Gastrocnemius medialis (tissue), 4 donors: ENCODE measurements at regions of chrX and their contacts with region 1.

Region 1: GRCh38 chrX:44872817-44873414 is at the start of gene KDM6A:
- DNase-seq: peak; percentile 91 to 95
- ATAC-seq: peak; percentile 84 to 86
- H3K4me3 ChIP-seq: peak within 1 kb of the TSS; percentile 74 to 83 (median 77)
- H3K27ac ChIP-seq: peak within 1 kb of the TSS; percentile 94 to 100 (median 98)
- H3K4me1 ChIP-seq: peaks cover 13 to 42% of the 10 kb centered on the region in 2 donors
- H3K27me3 ChIP-seq: no peaks in the 10 kb centered on the region
- CTCF ChIP-seq: no peak
- POLR2A ChIP-seq: peak; percentile 90 to 96
- total RNA-seq, gene KDM6A: 14.3 to 29.2 (median 20.1) TPM

Region 2: DNA sequence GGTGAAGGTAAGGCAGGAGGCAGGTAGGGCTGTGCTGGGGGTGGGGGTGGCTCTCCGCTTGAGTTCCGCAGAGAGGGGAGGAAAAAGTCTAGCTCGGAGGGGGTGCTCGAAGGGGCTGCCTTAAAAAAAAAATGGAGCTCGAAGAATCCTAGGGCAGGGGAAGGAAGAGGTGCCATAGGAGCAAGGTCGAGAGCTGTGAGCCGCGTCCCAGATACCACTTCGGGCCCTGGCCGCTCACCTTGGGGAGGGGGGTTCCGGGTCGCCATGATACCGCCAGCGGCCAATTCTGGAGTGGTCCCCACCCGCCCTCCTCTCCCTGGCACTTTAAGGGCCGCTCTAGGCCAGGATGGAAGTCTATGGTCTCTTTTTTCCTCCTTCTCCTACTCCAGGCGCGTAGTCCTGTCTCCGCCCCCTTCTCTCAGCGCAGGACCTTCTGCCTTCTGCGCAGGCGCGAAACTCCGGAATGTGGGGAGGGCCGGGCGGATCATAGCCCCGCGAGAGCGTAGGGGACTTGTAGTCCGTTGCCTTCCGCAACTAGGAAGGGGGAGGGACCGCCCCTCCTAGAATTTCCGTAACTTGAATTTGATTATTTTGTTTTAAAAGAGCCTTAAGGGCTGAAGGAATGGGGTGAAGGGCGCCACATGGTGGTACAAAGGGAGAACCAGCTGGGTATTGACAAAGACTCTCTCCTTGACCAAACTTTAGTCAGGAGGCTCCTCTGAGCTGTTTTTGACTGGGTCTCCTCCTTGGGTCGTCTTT is 330.2 kb before region 1 on chrX and contains the start of gene FUNDC1:
- in situ Hi-C with region 1: no loop called
- intact Hi-C with region 1: loop called (anchors 5 kb)
- DNase-seq: peak; percentile 77 to 89
- ATAC-seq: peak; percentile 99
- H3K4me3 ChIP-seq: peak within 1 kb of the TSS; percentile 48 to 80 (median 62)
- H3K27ac ChIP-seq: peak within 1 kb of the TSS; percentile 57 to 82 (median 77)
- H3K4me1 ChIP-seq: peaks cover 5 to 12% of the 10 kb centered on the region in 2 donors
- H3K27me3 ChIP-seq: no peaks in the 10 kb centered on the region
- CTCF ChIP-seq: peak in 3 of 5 experiments; percentile 23 to 31 (median 24)
- POLR2A ChIP-seq: peak; percentile 20 to 28
- total RNA-seq, gene FUNDC1: 3.5 to 17.0 (median 6.2) TPM

Region 3: GRCh38 chrX:44651358-44651757 is 221.6 kb before region 1 on chrX:
- in situ Hi-C with region 1: no loop called
- intact Hi-C with region 1: loop called (anchors 5 kb)
- DNase-seq: peak; percentile 47 to 83
- ATAC-seq: peak; percentile 96 to 98
- H3K4me3 ChIP-seq: no peak overlapping the region
- H3K27ac ChIP-seq: peak overlapping the region; percentile 56 to 73 (median 62)
- H3K4me1 ChIP-seq: no peaks in the 10 kb centered on the region
- H3K27me3 ChIP-seq: no peaks in the 10 kb centered on the region
- CTCF ChIP-seq: no peak
- POLR2A ChIP-seq: no peak

Region 4: DNA sequence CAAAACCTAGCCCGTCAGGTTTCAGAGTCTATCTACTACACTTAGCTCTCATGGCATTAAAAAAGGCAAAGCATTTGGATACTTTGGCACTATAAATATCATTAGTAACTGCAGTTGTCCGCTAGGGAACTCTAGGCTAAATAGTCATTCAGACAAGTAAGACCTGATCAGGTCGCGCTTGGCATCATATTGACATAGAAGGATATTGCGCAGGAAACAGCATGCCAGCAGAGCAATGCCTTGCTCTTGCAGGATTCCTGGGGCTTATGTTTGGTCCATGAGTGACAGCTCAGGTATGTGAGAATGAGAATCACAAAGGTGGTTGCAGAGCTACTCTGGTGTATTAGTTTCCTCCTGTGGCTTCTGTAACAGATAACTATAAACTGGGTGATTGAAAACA is 62.7 kb after region 1 on chrX:
- in situ Hi-C with region 1: no loop called
- intact Hi-C with region 1: loop called (anchors 2 kb)
- DNase-seq: peak; percentile 3 to 41
- ATAC-seq: peak in 1 of 2 donors; percentile 89
- H3K4me3 ChIP-seq: no peak overlapping the region
- H3K27ac ChIP-seq: peak overlapping the region in 3 of 4 donors; percentile 34 to 47 (median 39)
- H3K4me1 ChIP-seq: peaks cover 21 to 47% of the 10 kb centered on the region in 2 donors
- H3K27me3 ChIP-seq: no peaks in the 10 kb centered on the region
- CTCF ChIP-seq: peak in 2 of 5 experiments; percentile 26 to 37
- POLR2A ChIP-seq: no peak

Region 5: GRCh38 chrX:45017946-45018345 is 145.0 kb after region 1 on chrX:
- in situ Hi-C with region 1: no loop called
- intact Hi-C with region 1: loop called (anchors 5 kb)
- DNase-seq: no peak
- ATAC-seq: peak; percentile 58 to 69
- H3K4me3 ChIP-seq: no peak overlapping the region
- H3K27ac ChIP-seq: no peak overlapping the region
- H3K4me1 ChIP-seq: peaks cover 29 to 76% of the 10 kb centered on the region in 2 donors
- H3K27me3 ChIP-seq: no peaks in the 10 kb centered on the region
- CTCF ChIP-seq: no peak
- POLR2A ChIP-seq: no peak

Region 6: DNA sequence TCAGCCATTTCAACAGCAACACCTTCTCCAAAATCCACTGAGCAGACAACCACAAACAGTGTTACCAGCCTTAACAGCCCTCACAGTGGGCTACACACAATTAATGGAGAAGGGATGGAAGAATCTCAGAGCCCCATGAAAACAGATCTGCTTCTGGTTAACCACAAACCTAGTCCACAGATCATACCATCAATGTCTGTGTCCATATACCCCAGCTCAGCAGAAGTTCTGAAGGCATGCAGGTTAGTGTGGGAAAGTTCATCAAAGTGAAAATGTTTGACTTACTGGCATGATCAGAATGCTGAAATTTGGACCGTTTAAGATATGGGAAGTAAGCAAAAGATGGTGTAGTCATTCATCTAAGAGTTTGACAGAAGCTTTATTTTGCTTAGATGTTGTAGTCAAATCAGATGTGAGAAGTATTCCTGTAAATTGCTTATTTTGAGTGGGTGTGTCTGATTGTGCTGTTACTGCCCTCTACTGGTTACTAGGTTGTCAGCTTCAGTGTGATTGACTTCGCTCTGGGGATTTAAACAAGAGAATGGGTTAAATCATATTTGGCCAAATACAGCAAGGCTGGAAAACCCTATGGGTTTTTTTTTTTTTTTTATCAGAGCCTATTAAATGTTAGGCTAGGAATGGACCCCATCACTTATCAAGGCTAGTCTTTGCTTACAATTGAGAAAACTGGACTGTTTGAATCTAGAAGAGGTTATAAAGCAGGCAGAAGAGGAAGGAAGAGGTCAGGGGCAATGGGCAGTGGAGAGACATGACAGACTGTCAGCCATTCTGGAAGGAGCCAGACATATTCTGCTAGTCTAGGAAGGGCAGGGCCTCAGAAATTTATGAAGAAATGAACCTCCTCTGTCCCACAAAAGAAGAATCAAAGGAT is 197.4 kb after region 1 on chrX:
- in situ Hi-C with region 1: loop called in 2 of 4 experiments (anchors 25 kb)
- intact Hi-C with region 1: loop called (anchors 2 kb)
- DNase-seq: no peak
- ATAC-seq: no peak
- H3K4me3 ChIP-seq: no peak overlapping the region
- H3K27ac ChIP-seq: no peak overlapping the region
- H3K4me1 ChIP-seq: peaks cover 4 to 6% of the 10 kb centered on the region in 2 donors
- H3K27me3 ChIP-seq: no peaks in the 10 kb centered on the region
- CTCF ChIP-seq: peak; percentile 12 to 77 (median 49)
- POLR2A ChIP-seq: no peak